ENCODE measurements at regions of chr18 and their contacts with region 1.

Region 1: GRCh38 chr18:64119916-64120315 is 29.0 kb downstream of the LINC00305 start:
- DNase-seq: peak; percentile 29
- ATAC-seq: no peak
- H3K4me3 ChIP-seq: no peak overlapping the region
- H3K27ac ChIP-seq: no peak overlapping the region
- H3K4me1 ChIP-seq: no peaks in the 10 kb centered on the region
- H3K27me3 ChIP-seq: peaks cover 38% of the 10 kb centered on the region
- CTCF ChIP-seq: peak; percentile 54

Region 2: GRCh38 chr18:63284827-63285733 is 834.8 kb before region 1 on chr18:
- CTCF ChIA-PET with region 1: no interaction called
- POLR2A ChIA-PET with region 1: no interaction called
- intact Hi-C with region 1: no loop called
- DNase-seq: no peak
- ATAC-seq: no peak
- H3K4me3 ChIP-seq: no peak overlapping the region
- H3K27ac ChIP-seq: no peak overlapping the region
- H3K4me1 ChIP-seq: no peaks in the 10 kb centered on the region
- H3K27me3 ChIP-seq: peaks cover 28% of the 10 kb centered on the region; the same call in 1 of the 2 replicates
- CTCF ChIP-seq: no peak

Region 3: DNA sequence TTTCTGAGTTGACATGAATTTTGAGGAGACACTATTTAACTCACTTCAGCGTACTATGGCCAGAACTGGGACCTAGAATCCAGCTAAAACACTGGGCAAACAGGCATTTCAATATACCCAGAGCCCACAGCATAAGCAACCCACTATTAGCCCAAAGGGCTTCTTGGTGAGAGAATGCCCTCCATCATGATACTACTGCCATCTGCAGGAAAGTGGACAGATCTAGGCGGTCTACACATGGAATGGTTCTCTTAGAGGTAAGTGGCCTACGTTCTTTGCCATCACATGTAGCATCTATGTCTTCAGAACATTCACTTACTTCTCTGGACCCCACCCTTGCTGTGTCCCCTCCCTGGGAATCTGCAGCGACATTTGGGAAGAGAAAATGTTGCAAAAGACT is 210.2 kb after region 1 on chr18:
- CTCF ChIA-PET with region 1: no interaction called
- POLR2A ChIA-PET with region 1: no interaction called
- intact Hi-C with region 1: loop called (anchors 1 kb)
- DNase-seq: peak; percentile 18
- ATAC-seq: peak; percentile 62
- H3K4me3 ChIP-seq: no peak overlapping the region
- H3K27ac ChIP-seq: no peak overlapping the region
- H3K4me1 ChIP-seq: no peaks in the 10 kb centered on the region
- H3K27me3 ChIP-seq: peaks cover 44% of the 10 kb centered on the region
- CTCF ChIP-seq: peak; percentile 45; the same call in 1 of the 2 replicates